Lower leg skin (tissue), 4 donors: ENCODE measurements at regions of chr11 and their contacts with region 1.

Region 1: GRCh38 chr11:62383822-62384221 is 35.0 kb upstream of the SCGB1A1 start:
- DNase-seq: no peak
- H3K4me3 ChIP-seq: no peak overlapping the region
- CTCF ChIP-seq: no peak
- POLR2A ChIP-seq: no peak

Region 2: GRCh38 chr11:62705880-62706849 is 322.3 kb after region 1 on chr11:
- intact Hi-C with region 1: loop called (anchors 10 kb)
- DNase-seq: peak; percentile 92 to 99
- H3K4me3 ChIP-seq: peak overlapping the region; percentile 65
- CTCF ChIP-seq: no peak
- POLR2A ChIP-seq: no peak